K562 (cell line): ENCODE measurements at regions of chr7 and their contacts with region 1.

Region 1: DNA sequence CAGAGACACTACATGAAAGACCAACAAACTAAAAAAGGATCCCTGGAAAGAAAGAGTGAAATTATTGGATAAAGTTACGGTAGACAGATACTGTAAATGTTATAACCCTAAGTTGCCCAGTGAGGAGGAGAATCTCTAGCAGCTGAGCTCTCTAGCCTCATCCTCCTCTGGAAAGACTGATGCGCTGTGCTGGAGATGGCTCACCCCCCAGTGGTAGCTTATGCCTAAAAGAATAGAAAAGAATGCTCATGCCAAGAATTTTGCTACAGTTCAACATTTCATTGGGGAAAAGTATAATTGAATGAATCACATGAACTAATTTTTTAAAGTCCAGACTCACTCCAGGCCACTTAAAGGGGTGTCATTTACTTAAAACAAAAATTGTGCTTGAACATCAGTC is 50.8 kb upstream of the RNF32 start:
- DNase-seq: no peak
- ATAC-seq: peak; percentile 65
- H3K4me3 ChIP-seq: no peak overlapping the region
- H3K27ac ChIP-seq: no peak overlapping the region
- H3K4me1 ChIP-seq: no peaks in the 10 kb centered on the region
- H3K27me3 ChIP-seq: peaks cover 0 to 9% of the 10 kb centered on the region in 2 experiments; a peak in 2 of 5 replicates
- CTCF ChIP-seq: no peak
- EP300 ChIP-seq: no peak
- POLR2A ChIP-seq: no peak
- RAD21 ChIP-seq: no peak

Region 2: GRCh38 chr7:156356556-156356955 is 233.3 kb before region 1 on chr7:
- CTCF ChIA-PET with region 1: no interaction called
- POLR2A ChIA-PET with region 1: no interaction called
- in situ Hi-C with region 1: loop called (anchors 10 kb)
- intact Hi-C with region 1: no loop called
- DNase-seq: no peak
- ATAC-seq: no peak
- H3K4me3 ChIP-seq: no peak overlapping the region
- H3K27ac ChIP-seq: no peak overlapping the region
- H3K4me1 ChIP-seq: no peaks in the 10 kb centered on the region
- H3K27me3 ChIP-seq: peaks cover 30 to 36% of the 10 kb centered on the region in 2 experiments
- CTCF ChIP-seq: no peak
- EP300 ChIP-seq: no peak
- POLR2A ChIP-seq: no peak
- RAD21 ChIP-seq: no peak

Region 3: DNA sequence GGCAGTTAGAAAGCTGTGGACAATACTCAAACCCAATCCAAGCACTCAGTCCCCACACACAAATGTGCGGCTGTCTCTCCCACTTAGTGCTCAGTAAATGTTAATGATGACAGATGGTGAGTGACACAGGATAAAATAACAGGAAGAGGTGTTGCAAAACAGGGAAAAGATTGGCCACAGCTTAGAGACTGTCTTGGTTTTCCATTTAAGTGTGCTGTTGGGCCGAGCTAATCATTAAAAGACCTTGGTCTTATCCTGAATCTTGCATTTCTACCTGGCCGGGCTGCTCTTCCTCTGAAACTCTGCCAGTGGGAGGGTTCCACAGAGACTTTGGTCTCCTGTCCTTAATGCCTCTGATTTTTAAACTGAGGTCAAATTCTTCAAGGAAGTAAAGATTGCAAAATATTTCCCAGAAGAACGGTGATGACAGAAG is 62.3 kb before region 1 on chr7:
- CTCF ChIA-PET with region 1: no interaction called
- POLR2A ChIA-PET with region 1: no interaction called
- in situ Hi-C with region 1: no loop called
- intact Hi-C with region 1: no loop called
- DNase-seq: no peak
- ATAC-seq: no peak
- H3K4me3 ChIP-seq: no peak overlapping the region
- H3K27ac ChIP-seq: no peak overlapping the region
- H3K4me1 ChIP-seq: peaks cover 0 to 5% of the 10 kb centered on the region in 2 experiments; a peak in 3 of 5 replicates
- H3K27me3 ChIP-seq: peaks cover 38 to 40% of the 10 kb centered on the region in 2 experiments
- CTCF ChIP-seq: no peak
- EP300 ChIP-seq: no peak
- POLR2A ChIP-seq: no peak
- RAD21 ChIP-seq: no peak